ENCODE measurements at regions of chr18 and their contacts with region 1.

Region 1: DNA sequence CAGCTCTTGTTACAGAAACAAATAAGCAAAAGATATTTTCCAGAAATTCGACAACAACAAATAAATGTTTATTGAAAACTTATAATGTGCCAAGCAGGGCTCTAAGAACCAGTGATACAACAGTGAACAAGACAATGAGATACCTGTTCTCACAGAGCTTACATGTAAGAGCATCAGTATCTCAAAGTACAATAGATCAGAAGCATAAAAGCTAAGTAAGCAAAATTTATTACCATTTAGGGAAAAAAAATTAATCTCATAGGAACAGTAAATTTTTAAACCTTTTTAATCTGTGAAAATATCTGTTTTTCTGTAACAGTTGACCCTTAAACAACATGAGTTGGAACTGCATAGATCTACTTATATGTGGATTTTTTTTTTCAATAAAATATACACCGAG is 20.9 kb downstream of the ROCK1 start:
- DNase-seq: no peak
- ATAC-seq: no peak
- H3K4me3 ChIP-seq: no peak overlapping the region
- H3K4me3 Mint-ChIP-seq: no peak overlapping the region
- H3K27ac ChIP-seq: no peak overlapping the region
- H3K27ac Mint-ChIP-seq: no peak overlapping the region
- H3K4me1 ChIP-seq: peaks cover 0 to 3% of the 10 kb centered on the region in 2 donors
- H3K4me1 Mint-ChIP-seq: peaks cover 57% of the 10 kb centered on the region
- H3K27me3 ChIP-seq: no peaks in the 10 kb centered on the region
- H3K27me3 Mint-ChIP-seq: no peaks in the 10 kb centered on the region
- CTCF ChIP-seq: no peak

Region 2: GRCh38 chr18:21053127-21053526 is 37.6 kb before region 1 on chr18:
- CTCF ChIA-PET with region 1: no interaction called
- POLR2A ChIA-PET with region 1: no interaction called
- intact Hi-C with region 1: loop called (anchors 5 kb)
- DNase-seq: no peak
- ATAC-seq: no peak
- H3K4me3 ChIP-seq: no peak overlapping the region
- H3K4me3 Mint-ChIP-seq: no peak overlapping the region
- H3K27ac ChIP-seq: no peak overlapping the region
- H3K27ac Mint-ChIP-seq: no peak overlapping the region
- H3K4me1 ChIP-seq: peaks cover 19 to 40% of the 10 kb centered on the region in 2 donors
- H3K4me1 Mint-ChIP-seq: peaks cover 33% of the 10 kb centered on the region
- H3K27me3 ChIP-seq: no peaks in the 10 kb centered on the region
- H3K27me3 Mint-ChIP-seq: no peaks in the 10 kb centered on the region
- CTCF ChIP-seq: no peak